Right ventricle myocardium superior (tissue), 1 donor: ENCODE measurements at regions of chr12 and their contacts with region 1.

Region 1: DNA sequence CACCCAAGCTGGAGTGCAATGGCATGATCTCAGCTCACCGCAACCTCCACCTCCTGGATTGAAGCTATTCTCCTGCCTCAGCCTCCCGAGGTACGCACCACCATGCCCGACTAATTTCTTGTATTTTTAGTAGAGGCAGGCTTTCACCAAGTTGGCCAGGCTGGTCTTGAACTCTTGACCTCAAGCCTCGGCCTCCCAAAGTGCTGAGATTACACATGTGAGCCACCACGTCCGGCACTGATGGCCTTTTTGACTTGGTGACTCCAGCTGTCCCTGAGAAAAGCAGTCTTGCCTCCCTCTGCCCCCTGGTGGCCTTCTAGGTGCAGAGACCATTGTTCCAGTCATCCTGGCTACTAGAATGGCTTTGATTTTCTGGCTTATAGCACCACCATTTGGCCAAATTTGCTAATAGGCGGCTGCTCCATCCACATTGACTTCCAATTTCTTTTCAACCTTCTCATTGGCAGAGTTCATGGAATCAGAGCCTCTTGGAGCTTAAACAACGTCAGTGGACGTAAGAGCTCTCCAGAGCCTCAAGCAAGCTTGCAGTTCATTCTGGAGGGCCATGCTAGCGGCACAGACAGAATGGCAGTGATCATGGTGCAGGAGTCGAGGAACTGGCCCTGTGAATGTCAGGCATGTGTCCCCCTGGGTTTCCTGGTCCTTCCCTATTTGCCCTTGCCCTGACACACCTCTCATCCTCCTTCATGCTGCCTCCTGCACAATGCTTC is 25.4 kb upstream of the EIF4B start:
- DNase-seq: peak; percentile 89
- ATAC-seq: peak; percentile 96

Region 2: DNA sequence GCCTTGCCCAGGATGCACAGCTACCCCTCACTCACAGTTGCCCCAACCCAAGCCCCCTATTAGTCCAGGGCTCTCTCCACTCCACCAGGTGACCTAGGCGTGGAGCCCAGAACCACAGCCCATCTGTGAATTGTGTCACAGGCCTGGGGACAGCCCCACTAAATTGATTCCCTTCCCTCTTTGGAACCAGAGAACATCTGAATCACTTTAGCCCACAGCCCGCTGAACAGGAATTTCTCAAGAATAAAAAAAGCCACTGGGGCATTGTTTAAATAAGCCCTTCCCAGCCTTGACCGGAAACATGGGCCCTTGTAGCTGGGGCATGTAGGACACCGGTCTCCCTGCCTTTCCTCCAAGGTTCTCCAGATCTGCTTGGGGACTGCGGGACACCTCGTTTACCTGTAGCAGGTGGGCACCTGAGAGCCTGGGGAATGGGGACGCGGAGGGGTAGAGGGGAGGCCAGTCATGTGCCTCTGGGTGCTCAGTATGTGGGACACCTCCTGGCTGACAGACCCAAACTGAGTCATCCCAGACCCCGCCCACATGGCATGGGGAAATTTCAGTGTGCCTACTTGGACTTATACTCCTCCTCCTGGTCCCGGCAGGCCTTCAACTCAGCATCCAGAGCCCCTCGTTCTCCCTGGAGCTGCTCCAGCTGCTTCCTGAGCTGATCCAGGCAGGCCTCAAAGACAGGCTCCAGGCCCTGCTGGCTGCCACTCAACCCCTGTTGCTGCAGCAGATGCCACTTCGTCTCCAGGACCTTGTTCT is 133.3 kb before region 1 on chr12:
- intact Hi-C with region 1: no loop called
- DNase-seq: no peak
- ATAC-seq: no peak

Region 3: DNA sequence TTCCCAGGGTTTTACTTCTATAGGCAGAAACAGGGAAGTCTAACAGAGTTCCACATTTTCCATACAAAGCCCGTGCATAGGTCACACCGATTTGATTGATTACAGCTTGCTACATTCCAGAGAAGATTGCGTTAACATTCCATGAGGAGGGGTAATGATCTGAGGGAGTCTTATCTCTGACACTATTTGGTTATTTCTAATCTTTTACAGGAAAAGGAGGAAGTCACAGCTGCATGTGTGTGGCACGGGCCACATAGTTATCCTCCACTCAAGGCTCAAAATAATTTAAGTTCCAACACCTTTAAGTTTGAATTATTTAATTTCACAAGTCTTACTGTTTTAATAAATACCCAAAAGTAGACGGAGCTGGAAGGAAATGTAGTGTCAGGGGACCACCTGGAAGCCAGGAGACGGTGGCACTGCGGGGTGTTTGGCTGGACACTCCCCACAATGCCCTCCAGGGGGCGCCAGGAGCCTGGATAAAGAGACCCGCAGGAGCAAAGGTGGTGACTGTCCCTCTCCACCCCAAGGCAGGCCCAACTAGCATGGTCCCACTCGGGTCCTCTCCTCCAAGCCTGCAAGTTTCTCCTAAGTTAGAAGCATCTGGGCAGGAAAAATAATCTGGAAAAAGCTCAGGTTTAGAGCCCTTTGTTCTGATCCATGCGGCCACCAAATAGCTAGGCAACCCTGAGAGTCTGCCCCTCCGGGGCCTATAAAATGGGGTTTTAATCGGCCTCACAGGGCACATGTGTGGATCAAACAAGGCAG is 96.1 kb before region 1 on chr12:
- intact Hi-C with region 1: loop called (anchors 2 kb)
- DNase-seq: peak; percentile 87
- ATAC-seq: peak; percentile 86

Region 4: DNA sequence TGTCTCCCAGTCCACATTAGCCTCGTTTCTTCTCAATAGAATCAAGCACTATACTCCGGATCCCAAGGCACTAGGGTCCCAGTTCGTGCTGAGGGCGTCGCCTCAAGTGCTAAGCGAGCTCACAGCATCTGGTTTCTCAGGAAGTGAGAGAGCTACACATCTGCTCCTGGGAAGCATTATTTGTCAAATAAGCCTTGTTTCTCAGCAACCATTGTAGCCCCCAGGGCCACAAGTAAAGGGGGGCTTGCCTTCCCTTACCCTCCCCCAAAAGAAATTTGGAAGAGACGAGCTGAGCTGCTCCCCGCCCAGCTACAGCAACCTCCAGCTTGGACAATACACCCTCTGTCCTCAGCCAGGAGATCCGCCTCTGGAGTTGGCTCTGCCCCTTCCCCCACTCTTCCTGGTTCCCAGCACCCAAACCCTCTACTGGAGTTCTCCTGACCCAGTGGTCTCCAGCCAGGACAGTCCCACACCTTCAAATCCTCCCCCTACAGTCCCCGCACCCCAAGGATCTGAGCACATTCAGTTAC is 63.3 kb after region 1 on chr12:
- intact Hi-C with region 1: no loop called
- DNase-seq: peak; percentile 57
- ATAC-seq: no peak